PC-9 (cell line): ENCODE measurements at regions of chr12 and their contacts with region 1.

Region 1: GRCh38 chr12:110809149-110809548 is 37.6 kb upstream of the CCDC63 start:
- DNase-seq: peak in 1 of 2 experiments; percentile 68
- H3K4me3 ChIP-seq: no peak overlapping the region
- H3K27ac ChIP-seq: no peak overlapping the region
- H3K4me1 ChIP-seq: peaks cover 9% of the 10 kb centered on the region; the same call in 1 of the 2 replicates
- H3K27me3 ChIP-seq: peaks cover 10% of the 10 kb centered on the region; the same call in 1 of the 2 replicates
- CTCF ChIP-seq: no peak

Region 2: DNA sequence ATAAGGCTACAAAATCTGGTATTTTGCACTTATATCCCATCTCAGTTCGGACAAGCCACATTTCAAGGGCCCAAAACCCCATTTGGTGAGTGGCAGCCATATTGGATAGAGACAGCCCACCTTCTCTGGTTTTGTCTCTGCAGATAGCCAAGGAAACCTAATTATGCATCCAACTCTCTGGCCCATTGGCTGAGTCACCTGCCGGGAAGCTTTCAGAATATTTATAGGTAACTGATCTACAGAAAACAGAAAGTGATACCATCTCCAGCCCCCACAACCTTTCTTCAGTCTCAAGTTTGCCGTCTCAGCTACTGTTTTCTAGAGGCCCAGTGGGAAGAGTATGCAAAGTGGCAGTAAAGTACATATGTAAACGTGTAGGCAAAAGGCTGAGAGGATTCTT is 32.7 kb before region 1 on chr12:
- CTCF ChIA-PET with region 1: no interaction called
- POLR2A ChIA-PET with region 1: no interaction called
- intact Hi-C with region 1: no loop called
- DNase-seq: no peak
- H3K4me3 ChIP-seq: no peak overlapping the region
- H3K27ac ChIP-seq: no peak overlapping the region
- H3K4me1 ChIP-seq: no peaks in the 10 kb centered on the region
- H3K27me3 ChIP-seq: no peaks in the 10 kb centered on the region
- CTCF ChIP-seq: no peak

Region 3: DNA sequence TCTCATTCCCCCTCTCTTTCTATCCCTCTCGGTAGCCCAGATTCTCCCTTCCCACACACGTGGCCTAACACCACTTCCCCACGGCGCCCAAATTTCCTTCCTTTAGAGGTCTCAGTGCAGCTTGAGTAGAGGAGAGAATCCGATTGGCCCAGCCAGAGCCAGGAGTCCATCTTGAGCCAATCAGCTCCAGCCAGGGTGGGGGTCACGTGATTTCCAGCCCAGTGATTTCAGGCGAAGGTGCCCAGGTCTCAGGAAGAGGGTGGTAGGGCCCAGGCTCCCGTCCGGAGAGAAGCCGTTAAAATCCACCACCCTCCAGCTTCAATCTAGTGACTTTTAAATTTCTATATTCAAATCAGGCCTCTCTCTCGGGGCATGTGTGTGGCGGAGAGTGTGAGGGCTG is 156.4 kb after region 1 on chr12:
- CTCF ChIA-PET with region 1: no interaction called
- POLR2A ChIA-PET with region 1: interaction called, 17 read pairs
- intact Hi-C with region 1: no loop called
- DNase-seq: no peak
- H3K4me3 ChIP-seq: no peak overlapping the region
- H3K27ac ChIP-seq: no peak overlapping the region
- H3K4me1 ChIP-seq: no peaks in the 10 kb centered on the region
- H3K27me3 ChIP-seq: peaks cover 81% of the 10 kb centered on the region
- CTCF ChIP-seq: no peak